Endothelial cell of umbilical vein (primary cell): ENCODE measurements at regions of chr14 and their contacts with region 1.

Region 1: DNA sequence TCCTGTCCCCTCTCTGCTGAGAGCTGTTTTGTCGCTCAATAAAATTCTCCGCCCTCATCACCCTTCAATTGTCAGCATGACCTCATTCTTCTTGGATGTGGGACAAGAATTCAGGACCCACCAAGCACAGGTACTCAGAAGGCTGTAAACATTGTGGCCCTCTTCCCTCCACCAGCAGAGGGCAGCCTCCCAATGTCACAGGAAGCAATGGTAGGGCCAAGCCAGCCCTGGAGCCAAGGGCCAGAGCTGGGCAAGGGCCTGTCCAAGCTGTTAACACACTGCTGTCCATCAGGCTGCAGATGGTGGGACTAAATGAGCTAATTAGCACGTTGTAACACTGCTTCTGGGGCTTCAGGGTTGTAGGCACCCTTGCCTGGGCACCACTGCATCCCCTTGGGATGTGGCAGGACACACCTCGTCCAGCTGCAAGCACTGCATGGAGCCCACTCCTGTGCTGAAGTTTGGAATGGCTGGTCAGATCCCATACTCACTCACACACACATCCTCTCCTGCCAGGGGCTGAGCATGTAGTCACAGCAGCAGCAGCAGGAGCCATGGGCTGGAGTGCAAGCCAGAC is 62.7 kb upstream of the HECTD1 start:
- DNase-seq: no peak
- H3K4me3 ChIP-seq: no peak overlapping the region
- H3K27ac ChIP-seq: peak overlapping the region; percentile 21
- H3K4me1 ChIP-seq: peaks cover 9% of the 10 kb centered on the region
- H3K27me3 ChIP-seq: no peaks in the 10 kb centered on the region
- CTCF ChIP-seq: peak in 1 of 2 donors; percentile 24
- POLR2A ChIP-seq: no peak

Region 2: GRCh38 chr14:31090883-31091764 is 179.2 kb before region 1 on chr14:
- CTCF ChIA-PET with region 1: no interaction called
- POLR2A ChIA-PET with region 1: no interaction called
- dilution Hi-C with region 1: no loop called
- intact Hi-C with region 1: no loop called
- DNase-seq: peak; percentile 66
- H3K4me3 ChIP-seq: no peak overlapping the region
- H3K27ac ChIP-seq: no peak overlapping the region
- H3K4me1 ChIP-seq: no peaks in the 10 kb centered on the region
- H3K27me3 ChIP-seq: no peaks in the 10 kb centered on the region
- CTCF ChIP-seq: no peak
- POLR2A ChIP-seq: no peak

Region 3: GRCh38 chr14:31283578-31284252 is 13.4 kb after region 1 on chr14:
- CTCF ChIA-PET with region 1: interaction called, 15 read pairs
- POLR2A ChIA-PET with region 1: no interaction called
- dilution Hi-C with region 1: no loop called
- intact Hi-C with region 1: no loop called
- DNase-seq: peak; percentile 49
- H3K4me3 ChIP-seq: no peak overlapping the region
- H3K27ac ChIP-seq: peak overlapping the region; percentile 83
- H3K4me1 ChIP-seq: peaks cover 16% of the 10 kb centered on the region
- H3K27me3 ChIP-seq: no peaks in the 10 kb centered on the region
- CTCF ChIP-seq: no peak
- POLR2A ChIP-seq: no peak